PC-9 (cell line): ENCODE measurements at regions of chr19 and their contacts with region 1.

Region 1: DNA sequence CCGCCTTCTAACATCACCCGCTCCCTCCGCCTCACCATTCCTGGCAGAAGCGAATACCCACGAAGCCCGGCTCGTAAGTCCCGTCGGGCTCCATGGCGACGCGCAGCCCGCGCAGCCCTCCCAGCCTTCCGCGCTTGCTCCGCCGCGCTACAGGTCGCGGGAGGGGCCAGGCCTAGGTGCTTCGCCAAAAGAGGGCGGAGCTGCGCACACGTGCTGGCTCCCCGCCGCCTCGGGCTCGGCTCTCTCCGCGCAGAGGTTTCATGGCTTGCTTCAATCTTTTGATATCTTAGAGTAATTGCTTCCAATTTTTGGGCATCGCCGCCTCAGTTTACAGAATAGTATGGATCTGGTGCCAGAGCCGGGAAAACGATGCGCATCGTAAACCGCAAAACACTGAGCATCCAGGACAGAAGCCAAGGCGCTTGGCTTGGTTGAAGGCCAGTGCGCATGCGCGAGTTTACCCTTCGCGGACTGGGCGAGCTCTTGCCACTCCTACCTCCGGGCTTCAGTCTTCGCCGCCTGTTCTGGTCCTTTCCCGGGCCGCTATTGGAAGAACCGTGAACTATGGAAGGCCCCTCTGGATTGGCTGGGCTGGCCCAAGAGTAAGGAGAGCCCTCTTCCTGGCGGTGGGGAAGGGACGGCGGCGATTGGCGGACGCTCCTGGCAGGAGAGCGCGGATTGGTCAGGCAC is at the start of gene POLR2I:
- DNase-seq: peak; percentile 99
- H3K4me3 ChIP-seq: peak within 1 kb of the TSS; percentile 100
- H3K27ac ChIP-seq: peak within 1 kb of the TSS; percentile 67
- H3K4me1 ChIP-seq: peaks cover 12% of the 10 kb centered on the region
- H3K27me3 ChIP-seq: no peaks in the 10 kb centered on the region
- CTCF ChIP-seq: no peak
- total RNA-seq, gene POLR2I: 92.2 and 131 TPM in 2 replicates

Region 2: GRCh38 chr19:36064826-36065225 is 50.1 kb before region 1 on chr19:
- CTCF ChIA-PET with region 1: no interaction called
- POLR2A ChIA-PET with region 1: no interaction called
- intact Hi-C with region 1: loop called (anchors 2 kb)
- DNase-seq: no peak
- H3K4me3 ChIP-seq: no peak overlapping the region
- H3K27ac ChIP-seq: no peak overlapping the region
- H3K4me1 ChIP-seq: no peaks in the 10 kb centered on the region
- H3K27me3 ChIP-seq: no peaks in the 10 kb centered on the region
- CTCF ChIP-seq: no peak

Region 3: GRCh38 chr19:36139473-36140303 is 24.8 kb after region 1 on chr19 and contains the start of gene CAPNS1:
- CTCF ChIA-PET with region 1: no interaction called
- POLR2A ChIA-PET with region 1: interaction called, 3 read pairs
- intact Hi-C with region 1: loop called (anchors 1 kb)
- DNase-seq: peak; percentile 86 to 98
- H3K4me3 ChIP-seq: peak within 1 kb of the TSS; percentile 98
- H3K27ac ChIP-seq: peak within 1 kb of the TSS; percentile 96
- H3K4me1 ChIP-seq: peaks cover 52% of the 10 kb centered on the region
- H3K27me3 ChIP-seq: no peaks in the 10 kb centered on the region
- CTCF ChIP-seq: no peak; the same call in 1 of the 2 replicates
- total RNA-seq, gene CAPNS1: 1,014 and 1,177 TPM in 2 replicates

Region 4: DNA sequence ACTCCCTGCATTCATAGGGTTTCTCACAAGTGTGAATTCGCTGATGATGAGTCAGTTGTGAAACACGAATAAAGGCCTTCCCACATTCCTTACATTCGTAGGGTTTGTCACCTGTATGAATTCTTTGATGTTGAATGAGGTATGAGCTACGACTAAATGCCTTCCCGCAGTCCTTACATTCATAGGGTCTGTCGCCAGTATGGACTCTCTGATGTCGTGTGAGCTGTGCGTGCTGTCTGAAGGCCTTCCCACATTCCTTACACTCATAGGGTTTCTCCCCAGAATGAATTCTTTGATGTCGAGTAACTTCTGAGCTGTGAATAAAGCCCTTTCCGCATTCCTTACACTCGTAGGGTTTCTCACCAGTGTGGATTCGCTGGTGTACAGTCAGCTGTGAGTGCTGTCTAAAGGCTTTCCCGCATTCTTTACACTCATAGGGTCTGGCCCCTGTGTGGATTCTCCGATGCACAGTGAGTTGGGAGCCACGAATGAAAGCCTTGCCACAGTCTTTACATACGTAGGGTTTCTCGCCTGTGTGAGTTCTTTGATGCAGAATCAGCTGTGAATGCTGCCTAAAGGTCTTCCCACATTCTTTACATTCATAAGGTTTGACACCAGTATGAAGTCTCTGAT is 67.8 kb after region 1 on chr19:
- CTCF ChIA-PET with region 1: no interaction called
- POLR2A ChIA-PET with region 1: no interaction called
- intact Hi-C with region 1: no loop called
- DNase-seq: peak; percentile 29 to 64
- H3K4me3 ChIP-seq: no peak overlapping the region
- H3K27ac ChIP-seq: no peak overlapping the region
- H3K4me1 ChIP-seq: no peaks in the 10 kb centered on the region
- H3K27me3 ChIP-seq: no peaks in the 10 kb centered on the region
- CTCF ChIP-seq: no peak